ENCODE measurements at regions of chrX and their contacts with region 1.

Region 1: DNA sequence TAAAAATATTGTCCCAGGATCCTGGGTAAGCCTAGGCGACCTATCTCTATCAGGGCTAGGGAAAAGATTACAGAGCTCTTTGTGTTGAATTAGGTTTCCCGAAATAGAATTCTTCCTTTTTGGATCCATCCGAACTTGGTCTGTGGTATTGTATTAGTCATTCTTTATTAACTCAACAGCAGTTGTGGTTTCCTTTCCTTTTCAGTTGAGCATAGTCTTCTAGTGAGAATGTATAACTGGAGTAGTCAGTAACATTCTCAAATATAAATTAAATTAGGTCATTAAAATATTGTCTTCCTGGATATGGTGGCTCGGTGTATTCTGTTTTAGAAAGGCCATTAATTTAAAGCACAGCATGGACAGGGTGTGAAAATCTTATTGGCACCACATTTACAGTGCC is 520.4 kb downstream of the NLGN4X start:
- DNase-seq: no peak
- H3K4me3 ChIP-seq: no peak overlapping the region
- H3K27ac ChIP-seq: no peak overlapping the region
- H3K4me1 ChIP-seq: no peaks in the 10 kb centered on the region
- H3K27me3 ChIP-seq: no peaks in the 10 kb centered on the region
- CTCF ChIP-seq: no peak
- EP300 ChIP-seq: no peak
- POLR2A ChIP-seq: no peak

Region 2: DNA sequence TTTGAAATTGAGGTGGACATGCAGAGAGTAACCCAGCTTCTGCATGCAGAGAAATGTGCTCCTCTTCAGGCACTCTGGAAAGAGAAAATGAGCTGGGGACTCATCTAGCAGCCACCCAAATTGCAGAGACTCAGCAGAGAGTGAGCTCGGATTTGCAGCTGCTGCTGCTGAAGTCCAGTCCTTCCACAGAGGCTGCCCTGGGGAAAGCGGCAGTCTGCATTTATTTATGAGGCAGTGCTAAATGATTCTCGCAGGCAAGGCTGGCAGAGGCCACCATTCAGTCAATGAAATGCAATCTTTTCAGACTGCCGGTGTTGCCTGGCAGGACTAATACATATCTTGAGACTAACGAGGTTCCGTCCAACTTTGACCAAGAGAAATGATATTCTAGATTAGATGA is 115.7 kb after region 1 on chrX:
- in situ Hi-C with region 1: loop called in 1 of 4 experiments (anchors 25 kb)
- intact Hi-C with region 1: no loop called
- DNase-seq: no peak
- H3K4me3 ChIP-seq: no peak overlapping the region
- H3K27ac ChIP-seq: no peak overlapping the region
- H3K4me1 ChIP-seq: no peaks in the 10 kb centered on the region
- H3K27me3 ChIP-seq: no peaks in the 10 kb centered on the region
- CTCF ChIP-seq: no peak
- EP300 ChIP-seq: no peak
- POLR2A ChIP-seq: no peak

Measured in transverse colon (tissue), 4 donors.